IMR-90 (cell line): ENCODE measurements at regions of chr9 and their contacts with region 1.

Region 1: DNA sequence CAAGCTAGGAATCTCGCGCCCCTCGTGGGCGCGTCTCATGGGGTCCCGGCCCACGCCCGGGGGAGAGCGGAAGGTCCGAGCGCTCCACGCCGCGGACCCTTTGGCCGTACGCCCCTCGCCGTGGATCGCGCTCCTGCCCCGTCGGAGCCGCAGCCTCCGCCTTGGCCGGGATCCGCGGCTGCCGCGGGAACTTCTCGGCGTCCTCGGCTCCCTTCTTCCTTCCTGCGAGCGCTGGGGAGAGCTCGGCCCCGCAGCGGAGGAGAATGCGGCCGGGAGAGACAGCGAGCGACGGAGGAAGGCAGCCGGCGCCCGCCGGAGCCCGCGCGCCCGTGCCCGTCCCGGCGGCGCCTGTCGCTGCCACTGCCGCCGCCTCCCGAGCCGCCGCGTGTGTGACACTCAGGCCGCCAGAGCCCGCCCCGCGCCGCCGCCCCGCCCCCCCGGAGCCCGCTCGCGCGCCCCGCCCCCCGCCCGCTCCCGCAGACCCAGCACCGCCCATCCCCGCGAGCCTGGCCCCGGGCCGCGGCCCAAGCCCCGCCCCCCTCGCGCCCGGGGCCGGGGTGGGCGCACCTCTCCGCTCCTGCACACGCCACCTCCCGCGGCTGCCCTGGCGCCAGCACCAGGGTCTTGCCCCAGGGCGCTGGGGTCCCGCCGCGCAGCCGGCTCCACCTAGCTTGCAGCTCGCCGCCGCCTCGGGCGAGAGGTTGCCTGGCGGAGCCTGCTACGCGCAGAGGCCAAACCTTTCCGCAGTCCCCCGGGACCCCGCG is at the start of gene SHB:
- DNase-seq: peak; percentile 33
- ATAC-seq: peak; percentile 71
- H3K4me3 ChIP-seq: peak within 1 kb of the TSS; percentile 89
- H3K27ac ChIP-seq: peak within 1 kb of the TSS; percentile 95
- H3K4me1 ChIP-seq: peaks cover 19% of the 10 kb centered on the region
- H3K27me3 ChIP-seq: no peaks in the 10 kb centered on the region
- CTCF ChIP-seq: no peak
- POLR2A ChIP-seq: peak; percentile 96
- RAD21 ChIP-seq: no peak
- total RNA-seq, gene SHB: 6.1 and 7.8 TPM in 2 replicates

Region 2: DNA sequence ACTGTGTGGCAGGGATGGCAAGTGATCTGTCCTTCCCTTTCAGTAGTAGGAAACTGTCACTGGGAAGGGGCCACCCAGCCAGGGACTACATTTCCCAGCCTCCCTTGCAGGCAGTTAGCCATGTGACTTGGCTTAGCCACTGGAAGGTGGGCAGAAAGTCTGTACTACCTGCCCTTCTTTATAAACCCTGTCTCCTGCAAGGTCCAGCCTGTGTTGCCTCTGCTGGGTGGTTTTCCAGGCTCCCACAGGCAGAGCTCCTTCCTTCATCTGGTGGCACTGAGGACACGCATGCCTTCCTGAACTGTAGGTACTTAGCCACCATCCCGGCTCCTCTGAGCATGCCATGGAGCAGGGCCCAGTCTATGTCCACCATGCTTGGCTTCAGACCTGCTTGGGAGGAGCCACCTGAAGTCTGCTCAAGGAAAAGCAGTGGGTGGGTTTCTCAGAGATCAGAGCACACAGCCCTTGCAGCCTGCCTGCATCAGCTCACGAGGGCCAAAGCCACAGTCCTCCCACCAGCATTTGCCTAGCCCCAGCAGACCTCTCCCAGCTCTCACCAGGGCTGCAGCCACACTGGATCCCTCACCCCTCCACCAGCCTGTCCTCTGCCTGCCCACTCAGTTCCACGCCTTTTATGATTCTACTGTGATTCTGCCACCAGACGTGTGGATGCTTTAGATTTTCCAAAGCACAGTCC is 148.4 kb before region 1 on chr9:
- CTCF ChIA-PET with region 1: no interaction called
- POLR2A ChIA-PET with region 1: interaction called, 12 read pairs
- dilution Hi-C with region 1: loop called (anchors 25 kb)
- in situ Hi-C with region 1: loop called (anchors 10 kb)
- intact Hi-C with region 1: no loop called
- DNase-seq: no peak
- ATAC-seq: no peak
- H3K4me3 ChIP-seq: no peak overlapping the region
- H3K27ac ChIP-seq: no peak overlapping the region
- H3K4me1 ChIP-seq: peaks cover 6% of the 10 kb centered on the region; the same call in 1 of the 2 replicates
- H3K27me3 ChIP-seq: no peaks in the 10 kb centered on the region
- CTCF ChIP-seq: no peak
- POLR2A ChIP-seq: no peak
- RAD21 ChIP-seq: no peak

Region 3: GRCh38 chr9:37953775-37954437 is 115.1 kb before region 1 on chr9:
- CTCF ChIA-PET with region 1: no interaction called
- POLR2A ChIA-PET with region 1: no interaction called
- dilution Hi-C with region 1: loop called (anchors 25 kb)
- in situ Hi-C with region 1: no loop called
- intact Hi-C with region 1: loop called (anchors 5 kb)
- DNase-seq: peak; percentile 100
- ATAC-seq: peak; percentile 74
- H3K4me3 ChIP-seq: no peak overlapping the region
- H3K27ac ChIP-seq: peak overlapping the region; percentile 87
- H3K4me1 ChIP-seq: peaks cover 28% of the 10 kb centered on the region
- H3K27me3 ChIP-seq: no peaks in the 10 kb centered on the region
- CTCF ChIP-seq: no peak
- POLR2A ChIP-seq: peak; percentile 65; the same call in 1 of the 2 replicates
- RAD21 ChIP-seq: 0 out of 2 replicates have a peak, but pooled peaks have one; percentile 16

Region 4: DNA sequence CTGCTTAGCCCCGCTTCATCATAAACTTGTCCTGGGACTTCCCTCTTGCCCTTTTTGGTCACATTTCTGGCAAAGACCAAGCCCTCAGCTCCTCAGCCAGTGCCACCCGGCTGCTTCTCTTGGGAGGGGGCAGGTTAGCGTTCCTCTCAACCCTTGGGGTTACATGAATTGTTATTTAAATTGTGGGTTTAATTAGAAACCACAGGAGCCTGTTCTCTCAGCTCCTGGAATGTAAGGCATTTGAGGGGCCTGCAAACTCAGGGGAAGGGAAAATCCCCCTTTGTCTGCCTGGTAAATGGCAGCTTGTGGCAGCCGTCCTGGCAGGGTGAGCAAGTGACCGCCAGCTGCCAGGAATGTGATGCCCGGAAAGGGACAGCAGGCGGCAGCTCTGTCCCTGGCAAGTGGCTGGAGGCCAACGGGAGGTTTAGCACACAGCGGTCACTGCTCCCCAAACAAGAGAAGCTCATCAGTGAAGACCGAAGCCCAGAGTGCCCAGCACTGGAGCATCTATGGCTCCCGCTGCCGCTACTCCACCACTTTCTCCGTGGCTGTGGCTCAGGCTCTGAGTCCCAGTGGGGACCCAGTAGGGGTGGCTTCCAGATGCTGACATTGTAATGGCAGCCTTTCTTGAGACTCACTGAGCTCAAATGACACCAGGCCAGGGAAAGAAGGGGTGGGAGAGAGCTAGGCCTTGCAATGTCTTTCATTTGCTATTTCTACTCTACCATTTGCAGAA is 51.7 kb before region 1 on chr9:
- CTCF ChIA-PET with region 1: interaction called, 8 read pairs
- POLR2A ChIA-PET with region 1: no interaction called
- dilution Hi-C with region 1: no loop called
- in situ Hi-C with region 1: loop called (anchors 5 kb)
- intact Hi-C with region 1: loop called (anchors 2 kb)
- DNase-seq: peak; percentile 62
- ATAC-seq: peak; percentile 34
- H3K4me3 ChIP-seq: no peak overlapping the region
- H3K27ac ChIP-seq: peak overlapping the region; percentile 65
- H3K4me1 ChIP-seq: peaks cover 41% of the 10 kb centered on the region
- H3K27me3 ChIP-seq: no peaks in the 10 kb centered on the region
- CTCF ChIP-seq: peak; percentile 29; the same call in 1 of the 2 replicates
- POLR2A ChIP-seq: no peak
- RAD21 ChIP-seq: peak; percentile 24; the same call in 1 of the 2 replicates

Region 5: GRCh38 chr9:38107811-38108304 is 38.8 kb after region 1 on chr9:
- CTCF ChIA-PET with region 1: no interaction called
- POLR2A ChIA-PET with region 1: no interaction called
- dilution Hi-C with region 1: no loop called
- in situ Hi-C with region 1: no loop called
- intact Hi-C with region 1: no loop called
- DNase-seq: no peak
- ATAC-seq: no peak
- H3K4me3 ChIP-seq: no peak overlapping the region
- H3K27ac ChIP-seq: no peak overlapping the region
- H3K4me1 ChIP-seq: no peaks in the 10 kb centered on the region; the same call in 1 of the 2 replicates
- H3K27me3 ChIP-seq: peaks cover 36% of the 10 kb centered on the region
- CTCF ChIP-seq: no peak
- POLR2A ChIP-seq: no peak
- RAD21 ChIP-seq: no peak

Region 6: DNA sequence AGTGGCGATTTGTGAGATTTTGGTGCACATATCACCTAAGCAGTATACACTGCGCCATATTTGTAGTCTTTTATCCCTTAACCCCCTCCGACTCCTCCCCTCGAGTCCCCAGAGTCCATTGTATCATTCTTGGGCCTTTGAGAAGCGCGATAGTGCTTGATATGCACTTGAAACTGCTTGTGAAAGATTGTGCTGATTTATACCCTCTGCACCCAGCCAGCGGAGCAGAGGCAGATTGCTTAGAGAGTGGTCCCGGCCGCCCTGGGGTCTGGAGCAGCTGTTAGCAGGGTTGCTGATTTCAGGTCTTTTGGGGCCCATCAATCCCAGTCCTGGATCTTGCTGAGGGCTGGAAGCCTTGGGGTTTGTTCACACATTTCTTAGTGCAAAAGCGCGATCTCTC is 663.8 kb after region 1 on chr9:
- CTCF ChIA-PET with region 1: no interaction called
- POLR2A ChIA-PET with region 1: no interaction called
- dilution Hi-C with region 1: no loop called
- in situ Hi-C with region 1: no loop called
- intact Hi-C with region 1: no loop called
- DNase-seq: no peak
- ATAC-seq: no peak
- H3K4me3 ChIP-seq: no peak overlapping the region
- H3K27ac ChIP-seq: no peak overlapping the region
- H3K4me1 ChIP-seq: no peaks in the 10 kb centered on the region
- H3K27me3 ChIP-seq: no peaks in the 10 kb centered on the region
- CTCF ChIP-seq: no peak
- POLR2A ChIP-seq: no peak
- RAD21 ChIP-seq: no peak